BJ (cell line): ENCODE measurements at regions of chr5 and their contacts with region 1.

Region 1: GRCh38 chr5:115069087-115069968 is 100.4 kb downstream of the TRIM36 start:
- DNase-seq: no peak
- H3K4me3 ChIP-seq: no peak overlapping the region
- H3K27me3 ChIP-seq: no peaks in the 10 kb centered on the region
- CTCF ChIP-seq: peak; percentile 72

Region 2: GRCh38 chr5:113612060-113612496 is 1457.2 kb before region 1 on chr5:
- CTCF ChIA-PET with region 1: interaction called, 13 read pairs
- POLR2A ChIA-PET with region 1: no interaction called
- DNase-seq: no peak
- H3K4me3 ChIP-seq: no peak overlapping the region
- H3K27me3 ChIP-seq: no peaks in the 10 kb centered on the region
- CTCF ChIP-seq: peak; percentile 54

Region 3: GRCh38 chr5:115231598-115231997 is 162.3 kb after region 1 on chr5:
- CTCF ChIA-PET with region 1: no interaction called
- POLR2A ChIA-PET with region 1: no interaction called
- DNase-seq: no peak
- H3K4me3 ChIP-seq: no peak overlapping the region
- H3K27me3 ChIP-seq: no peaks in the 10 kb centered on the region
- CTCF ChIP-seq: no peak